Heart left ventricle (tissue), 16 donors: ENCODE measurements at regions of chr15 and their contacts with region 1.

Region 1: DNA sequence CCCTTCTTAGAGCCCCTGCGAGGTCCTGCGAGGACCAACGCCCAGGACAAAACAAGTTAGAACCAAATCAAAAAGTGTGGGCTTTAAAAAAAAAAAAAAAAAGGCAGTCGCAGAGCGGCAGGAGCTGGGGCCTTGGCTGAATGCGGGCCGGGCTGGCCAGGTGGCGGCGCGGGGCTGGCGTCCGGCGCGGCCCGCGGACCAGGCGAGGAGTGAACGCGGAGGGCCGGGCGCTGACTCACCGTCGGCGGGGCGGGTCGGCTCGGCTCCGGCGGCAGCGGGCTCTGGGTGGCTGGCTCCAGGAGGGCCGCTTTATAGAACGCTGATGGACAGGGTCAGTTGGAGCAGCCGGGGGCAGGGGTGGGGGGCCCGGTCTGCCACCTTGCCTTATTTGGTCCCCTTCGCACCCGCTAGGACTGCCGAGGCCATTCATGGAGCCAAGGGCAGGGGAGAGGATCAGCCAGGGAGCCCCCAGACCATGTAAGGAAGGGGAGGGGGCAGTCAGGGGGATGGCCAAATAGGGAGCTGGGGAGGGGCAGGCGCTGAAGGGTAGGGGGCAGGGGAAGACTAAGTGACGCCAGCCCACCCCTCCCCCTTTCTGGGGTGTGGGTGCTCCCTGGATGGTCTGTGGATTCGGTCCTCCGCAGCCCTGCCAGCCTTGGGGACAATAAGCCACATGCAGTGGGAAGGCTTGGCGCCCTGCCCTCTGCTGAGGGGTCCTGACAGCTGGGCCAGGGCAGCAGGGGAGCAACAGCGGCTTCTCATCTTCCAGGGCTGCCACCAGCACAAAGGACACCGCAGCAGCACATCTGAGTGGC is at the start of gene ACTC1:
- DNase-seq: peak; percentile 76 to 94 (median 83)
- ATAC-seq: peak; percentile 29 to 61 (median 58)
- H3K4me3 ChIP-seq: peak within 1 kb of the TSS; percentile 43 to 84 (median 61)
- H3K27ac ChIP-seq: peak within 1 kb of the TSS; percentile 69 to 96 (median 93)
- H3K4me1 ChIP-seq: peaks cover 0 to 43% (median 17%) of the 10 kb centered on the region in 12 donors
- H3K27me3 ChIP-seq: peaks cover 0 to 44% (median 5%) of the 10 kb centered on the region in 9 donors
- CTCF ChIP-seq: peak in 1 of 12 donors; percentile 12
- POLR2A ChIP-seq: peak in 1 of 2 donors; percentile 86
- total RNA-seq, gene ACTC1: 3,808 to 17,901 (median 12,860) TPM

Region 2: DNA sequence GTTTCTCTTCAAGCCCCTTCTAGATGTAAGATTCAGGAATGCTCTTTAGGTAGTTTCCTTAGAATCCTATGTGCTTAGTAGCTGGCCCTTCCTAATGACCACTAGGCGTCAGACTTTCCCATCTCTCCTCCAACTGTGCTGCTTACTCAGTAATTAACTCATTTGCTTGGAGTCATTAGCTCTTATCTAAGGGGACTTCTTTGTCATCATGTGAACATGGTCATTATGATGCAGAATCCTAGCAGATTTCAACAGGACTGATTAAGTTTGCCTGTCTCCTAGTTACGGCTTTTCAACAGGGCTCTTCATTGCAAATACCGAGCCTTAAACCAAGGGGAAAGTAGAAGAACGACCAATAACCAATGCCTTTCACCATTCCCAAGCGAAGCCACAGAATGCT is 87.1 kb before region 1 on chr15:
- intact Hi-C with region 1: loop called in 1 of 10 experiments (anchors 10 kb)
- DNase-seq: no peak
- ATAC-seq: peak in 3 of 4 donors; percentile 63 to 83 (median 74)
- H3K4me3 ChIP-seq: peak overlapping the region in 1 of 12 donors; percentile 16
- H3K27ac ChIP-seq: peak overlapping the region in 1 of 12 donors; percentile 14
- H3K4me1 ChIP-seq: peaks cover 0 to 12% (median 0%) of the 10 kb centered on the region in 12 donors
- H3K27me3 ChIP-seq: peaks cover 0 to 6% (median 0%) of the 10 kb centered on the region in 9 donors
- CTCF ChIP-seq: peak; percentile 36 to 78 (median 68)
- POLR2A ChIP-seq: no peak

Region 3: DNA sequence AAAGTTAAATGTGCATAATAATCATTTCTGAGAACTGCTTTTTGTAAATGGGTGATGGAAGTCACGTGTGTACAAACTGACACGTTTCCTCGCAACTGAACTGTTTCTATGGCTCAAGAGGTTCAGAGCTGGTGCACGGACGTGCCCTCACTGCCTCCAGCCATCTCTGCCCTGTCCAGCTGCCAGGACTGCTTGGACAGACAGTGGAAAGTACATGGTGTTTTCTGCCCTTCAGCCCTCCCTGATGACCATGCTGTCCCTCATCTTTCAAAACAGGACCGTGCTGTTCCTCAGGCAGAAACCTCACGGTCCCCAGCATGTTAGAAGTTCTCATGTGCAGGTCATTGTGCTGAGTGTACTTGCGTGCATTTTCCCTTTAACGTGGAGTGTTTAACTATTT is 79.4 kb before region 1 on chr15:
- intact Hi-C with region 1: loop called in 6 of 10 experiments (anchors 2 to 10 kb)
- DNase-seq: peak in 3 of 5 donors; percentile 24 to 83 (median 77)
- ATAC-seq: peak; percentile 88 to 95 (median 93)
- H3K4me3 ChIP-seq: no peak overlapping the region
- H3K27ac ChIP-seq: peak overlapping the region in 7 of 12 donors; percentile 4 to 69 (median 26)
- H3K4me1 ChIP-seq: peaks cover 0 to 48% (median 10%) of the 10 kb centered on the region in 12 donors
- H3K27me3 ChIP-seq: peaks cover 0 to 6% (median 0%) of the 10 kb centered on the region in 9 donors
- CTCF ChIP-seq: no peak
- POLR2A ChIP-seq: no peak

Region 4: DNA sequence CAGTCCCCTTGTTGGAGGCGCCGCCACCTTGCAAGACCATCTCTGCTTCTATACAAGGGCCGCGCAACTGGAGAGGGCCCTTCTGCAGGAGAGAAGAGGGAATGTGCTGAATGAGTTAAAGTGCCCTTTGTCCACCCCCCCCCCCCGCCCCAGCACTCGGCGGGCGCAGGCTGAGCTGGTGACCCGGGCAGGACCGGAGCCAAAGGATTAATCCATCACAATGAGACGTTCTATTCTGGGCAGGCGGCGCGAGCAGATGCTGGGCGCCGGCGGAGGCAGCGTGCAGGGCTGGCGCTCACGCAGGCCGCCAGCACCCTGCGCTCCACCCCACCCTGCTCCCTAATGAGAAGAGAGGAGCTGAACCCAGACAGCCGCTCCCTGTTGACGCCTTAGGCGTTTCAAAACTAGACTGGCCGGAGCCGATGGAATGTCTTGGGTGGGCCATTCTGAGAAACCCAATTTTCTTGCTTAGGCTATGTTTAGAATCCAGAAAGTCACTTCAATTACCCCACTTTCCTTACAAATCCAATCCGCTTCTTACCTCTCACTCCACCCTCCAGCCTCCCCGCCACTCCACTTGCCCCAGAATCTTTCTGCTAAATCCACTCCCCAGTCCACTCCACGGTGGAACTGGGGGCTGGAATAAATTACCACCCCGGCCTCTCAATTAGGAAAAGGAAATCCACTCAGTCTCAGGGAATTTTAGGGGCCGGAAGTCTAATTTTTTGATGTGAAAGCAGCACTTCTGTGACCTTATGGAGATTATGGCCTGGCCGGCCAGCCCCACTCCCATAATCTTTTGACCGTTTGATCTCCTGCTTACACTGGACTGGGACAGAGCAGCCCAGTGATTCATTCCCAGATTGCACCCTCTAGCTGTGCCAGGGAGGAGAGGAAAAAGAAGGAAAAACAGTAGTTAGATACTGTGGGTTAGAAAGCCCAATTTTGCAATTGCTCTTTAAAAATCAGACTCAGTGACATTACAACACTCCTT is 73.4 kb before region 1 on chr15:
- intact Hi-C with region 1: loop called in 6 of 10 experiments (anchors 2 to 10 kb)
- DNase-seq: peak; percentile 65 to 88 (median 75)
- ATAC-seq: peak; percentile 87 to 96 (median 94)
- H3K4me3 ChIP-seq: peak overlapping the region in 9 of 12 donors; percentile 0 to 35 (median 17)
- H3K27ac ChIP-seq: peak overlapping the region; percentile 34 to 90 (median 80)
- H3K4me1 ChIP-seq: peaks cover 0 to 67% (median 23%) of the 10 kb centered on the region in 12 donors
- H3K27me3 ChIP-seq: peaks cover 0 to 18% (median 0%) of the 10 kb centered on the region in 9 donors
- CTCF ChIP-seq: peak in 2 of 12 donors; percentile 14 to 20
- POLR2A ChIP-seq: peak in 1 of 2 donors; percentile 37

Region 5: GRCh38 chr15:34847612-34848011 is 52.1 kb after region 1 on chr15:
- intact Hi-C with region 1: loop called in 2 of 10 experiments (anchors 5 to 10 kb)
- DNase-seq: no peak
- ATAC-seq: no peak
- H3K4me3 ChIP-seq: no peak overlapping the region
- H3K27ac ChIP-seq: no peak overlapping the region
- H3K4me1 ChIP-seq: peaks cover 0 to 4% (median 1%) of the 10 kb centered on the region in 12 donors
- H3K27me3 ChIP-seq: no peaks in the 10 kb centered on the region
- CTCF ChIP-seq: no peak
- POLR2A ChIP-seq: no peak

Region 6: DNA sequence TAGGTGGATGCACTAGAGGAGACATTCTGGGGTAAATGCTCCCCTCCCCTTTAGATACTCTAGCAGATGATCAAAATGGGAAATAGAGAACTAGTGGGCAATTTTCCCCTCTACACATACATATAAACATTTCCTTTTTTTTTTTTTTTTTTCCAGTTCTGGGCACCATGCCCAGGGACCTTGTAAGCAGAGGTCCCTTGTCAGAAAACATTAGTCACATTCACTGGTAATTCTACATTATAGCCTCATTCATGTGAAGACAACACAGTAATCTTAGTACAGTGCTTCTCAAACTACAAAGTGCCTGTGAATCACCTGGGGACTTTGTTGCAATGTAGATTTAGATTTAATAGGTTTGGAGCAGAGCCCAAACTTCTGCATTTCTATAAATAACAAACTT is 59.9 kb after region 1 on chr15:
- intact Hi-C with region 1: loop called in 1 of 10 experiments (anchors 10 kb)
- DNase-seq: no peak
- ATAC-seq: peak in 3 of 4 donors; percentile 24 to 41 (median 36)
- H3K4me3 ChIP-seq: no peak overlapping the region
- H3K27ac ChIP-seq: peak overlapping the region in 4 of 12 donors; percentile 9 to 32 (median 23)
- H3K4me1 ChIP-seq: peaks cover 2 to 31% (median 19%) of the 10 kb centered on the region in 12 donors
- H3K27me3 ChIP-seq: no peaks in the 10 kb centered on the region
- CTCF ChIP-seq: no peak
- POLR2A ChIP-seq: no peak

Region 7: GRCh38 chr15:34900748-34901147 is 105.3 kb after region 1 on chr15:
- intact Hi-C with region 1: loop called in 1 of 10 experiments (anchors 10 kb)
- DNase-seq: peak in 1 of 5 donors; percentile 19
- ATAC-seq: peak; percentile 58 to 94 (median 84)
- H3K4me3 ChIP-seq: no peak overlapping the region
- H3K27ac ChIP-seq: peak overlapping the region in 11 of 12 donors; percentile 9 to 67 (median 49)
- H3K4me1 ChIP-seq: peaks cover 0 to 8% (median 0%) of the 10 kb centered on the region in 12 donors
- H3K27me3 ChIP-seq: no peaks in the 10 kb centered on the region
- CTCF ChIP-seq: no peak
- POLR2A ChIP-seq: no peak